Gastrocnemius medialis (tissue), 4 donors: ENCODE measurements at regions of chr11 and their contacts with region 1.

Region 1: GRCh38 chr11:65988791-65989592 is 13.0 kb downstream of the EIF1AD start:
- DNase-seq: peak; percentile 83 to 91
- ATAC-seq: peak; percentile 100
- H3K4me3 ChIP-seq: no peak overlapping the region
- H3K27ac ChIP-seq: peak overlapping the region in 3 of 4 donors; percentile 6 to 40 (median 32)
- H3K4me1 ChIP-seq: no peaks in the 10 kb centered on the region
- H3K27me3 ChIP-seq: no peaks in the 10 kb centered on the region
- CTCF ChIP-seq: peak; percentile 88 to 98 (median 93)
- POLR2A ChIP-seq: no peak

Region 2: GRCh38 chr11:65711785-65712632 is 277.0 kb before region 1 on chr11 and contains the start of gene KAT5:
- in situ Hi-C with region 1: loop called (anchors 10 to 25 kb)
- intact Hi-C with region 1: loop called (anchors 1 kb)
- DNase-seq: peak; percentile 97 to 98
- ATAC-seq: peak; percentile 92 to 94
- H3K4me3 ChIP-seq: peak within 1 kb of the TSS; percentile 73 to 97 (median 84)
- H3K27ac ChIP-seq: peak within 1 kb of the TSS; percentile 96 to 100 (median 99)
- H3K4me1 ChIP-seq: peaks cover 15 to 18% of the 10 kb centered on the region in 2 donors
- H3K27me3 ChIP-seq: no peaks in the 10 kb centered on the region
- CTCF ChIP-seq: peak; percentile 98 to 100 (median 100)
- POLR2A ChIP-seq: peak; percentile 83 to 86
- total RNA-seq, gene KAT5: 40.0 to 69.4 (median 50.0) TPM

Region 3: GRCh38 chr11:65730484-65730883 is 258.5 kb before region 1 on chr11:
- in situ Hi-C with region 1: no loop called
- intact Hi-C with region 1: no loop called
- DNase-seq: no peak
- ATAC-seq: no peak
- H3K4me3 ChIP-seq: no peak overlapping the region
- H3K27ac ChIP-seq: no peak overlapping the region
- H3K4me1 ChIP-seq: no peaks in the 10 kb centered on the region
- H3K27me3 ChIP-seq: no peaks in the 10 kb centered on the region
- CTCF ChIP-seq: no peak
- POLR2A ChIP-seq: no peak

Region 4: DNA sequence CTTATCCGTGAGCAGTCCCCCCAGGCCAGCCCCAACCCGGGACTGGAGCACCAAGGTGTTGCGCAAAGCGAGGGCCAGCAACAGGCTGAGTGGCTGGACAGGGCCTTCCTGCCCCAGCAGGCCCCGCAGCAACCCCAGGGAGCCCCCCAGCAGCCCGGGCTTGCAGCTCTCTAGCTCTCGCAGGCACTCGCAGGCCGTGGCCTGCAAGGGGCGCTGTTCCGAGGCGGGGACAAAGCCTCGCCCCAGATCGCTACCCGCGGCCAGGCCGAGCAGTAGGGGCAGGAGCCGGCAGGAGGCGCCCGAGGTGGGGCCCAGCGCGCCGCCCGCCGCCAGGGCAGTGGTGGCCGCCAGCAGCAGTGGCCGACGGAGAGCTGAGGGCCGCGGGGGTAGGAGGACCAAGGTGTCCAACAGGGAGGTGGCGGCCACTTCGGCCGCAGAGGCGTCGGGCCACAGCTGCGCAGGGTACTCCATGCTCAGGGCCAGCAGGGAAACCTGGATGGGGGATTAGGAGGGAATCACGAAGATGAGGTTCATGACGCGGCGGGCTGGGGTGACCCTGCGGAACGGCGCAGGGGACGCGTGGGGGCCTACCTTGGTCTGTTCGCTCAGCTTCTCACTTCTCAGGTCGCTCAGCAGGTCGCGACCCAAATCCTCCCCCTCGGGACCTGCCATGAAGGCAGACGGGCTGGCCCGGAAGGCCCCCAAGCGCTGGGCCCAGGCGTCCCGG is 209.0 kb before region 1 on chr11:
- in situ Hi-C with region 1: no loop called
- intact Hi-C with region 1: loop called (anchors 10 kb)
- DNase-seq: peak in 1 of 2 donors; percentile 72
- ATAC-seq: peak; percentile 61 to 65
- H3K4me3 ChIP-seq: peak overlapping the region; percentile 59 to 97 (median 74)
- H3K27ac ChIP-seq: peak overlapping the region; percentile 59 to 88 (median 80)
- H3K4me1 ChIP-seq: peaks cover 9% of the 10 kb centered on the region in 2 donors
- H3K27me3 ChIP-seq: peaks cover 0 to 7% (median 4%) of the 10 kb centered on the region in 3 donors
- CTCF ChIP-seq: peak; percentile 77 to 99 (median 87)
- POLR2A ChIP-seq: peak in 1 of 2 donors; percentile 44

Region 5: GRCh38 chr11:65888163-65888814 is 100.7 kb before region 1 on chr11 and contains the start of gene FIBP:
- in situ Hi-C with region 1: loop called (anchors 5 to 10 kb)
- intact Hi-C with region 1: loop called (anchors 1 kb)
- DNase-seq: peak; percentile 97 to 98
- ATAC-seq: peak; percentile 68
- H3K4me3 ChIP-seq: peak within 1 kb of the TSS; percentile 66 to 86 (median 78)
- H3K27ac ChIP-seq: peak within 1 kb of the TSS; percentile 93 to 98 (median 96)
- H3K4me1 ChIP-seq: peaks cover 41 to 45% of the 10 kb centered on the region in 2 donors
- H3K27me3 ChIP-seq: no peaks in the 10 kb centered on the region
- CTCF ChIP-seq: peak; percentile 85 to 95 (median 93)
- POLR2A ChIP-seq: peak; percentile 80 to 92
- total RNA-seq, gene FIBP: 39.6 to 79.3 (median 53.0) TPM

Region 6: GRCh38 chr11:65932558-65932919 is 56.5 kb before region 1 on chr11:
- in situ Hi-C with region 1: no loop called
- intact Hi-C with region 1: no loop called
- DNase-seq: no peak
- ATAC-seq: no peak
- H3K4me3 ChIP-seq: no peak overlapping the region
- H3K27ac ChIP-seq: no peak overlapping the region
- H3K4me1 ChIP-seq: no peaks in the 10 kb centered on the region
- H3K27me3 ChIP-seq: peaks cover 0 to 6% (median 0%) of the 10 kb centered on the region in 3 donors
- CTCF ChIP-seq: no peak
- POLR2A ChIP-seq: no peak

Region 7: GRCh38 chr11:65968600-65969482 is 20.2 kb before region 1 on chr11:
- in situ Hi-C with region 1: no loop called
- intact Hi-C with region 1: loop called (anchors 1 kb)
- DNase-seq: peak; percentile 57 to 76
- ATAC-seq: peak; percentile 98
- H3K4me3 ChIP-seq: no peak overlapping the region
- H3K27ac ChIP-seq: peak overlapping the region; percentile 78 to 86 (median 82)
- H3K4me1 ChIP-seq: peaks cover 25 to 26% of the 10 kb centered on the region in 2 donors
- H3K27me3 ChIP-seq: no peaks in the 10 kb centered on the region
- CTCF ChIP-seq: peak in 4 of 5 experiments; percentile 30 to 48 (median 32)
- POLR2A ChIP-seq: no peak

Region 8: DNA sequence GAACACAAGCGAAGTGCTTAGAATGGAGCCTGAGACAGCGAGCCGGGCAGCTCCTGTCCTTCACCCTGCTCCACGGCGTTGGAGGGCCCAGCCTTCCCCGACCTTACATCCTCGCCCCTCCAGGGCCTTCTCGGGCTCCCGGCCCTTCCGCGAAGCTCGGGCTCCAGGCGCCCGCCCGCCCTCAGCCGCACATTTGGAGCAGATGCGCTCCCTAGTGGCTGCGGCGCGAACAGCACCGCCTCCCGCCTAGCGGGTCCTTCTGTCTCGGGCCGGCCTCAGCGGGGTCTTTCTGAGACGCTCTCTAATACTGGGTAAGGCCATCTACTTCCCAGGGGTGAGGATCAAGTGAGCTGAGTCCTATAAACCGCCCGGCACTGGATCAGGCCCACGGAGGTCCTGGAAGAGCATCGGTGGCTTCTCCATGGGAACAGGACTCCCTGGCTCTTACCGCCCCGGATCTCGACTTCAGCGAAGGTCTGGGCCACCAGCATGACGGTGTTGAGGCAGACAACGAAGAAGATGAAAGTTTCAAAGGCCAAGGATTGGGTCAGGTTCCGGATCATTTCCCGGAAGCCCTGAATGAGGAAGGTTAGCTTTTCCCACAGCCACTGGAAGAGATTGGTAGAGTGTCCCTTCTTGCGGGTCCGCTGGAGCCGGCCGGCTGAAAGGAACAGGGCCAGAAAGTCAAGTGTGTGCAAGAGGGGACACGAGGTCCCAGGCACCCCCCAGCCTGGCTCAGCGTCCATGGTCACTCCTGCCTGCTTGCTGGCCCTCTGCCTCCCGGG is 33.6 kb after region 1 on chr11:
- in situ Hi-C with region 1: no loop called
- intact Hi-C with region 1: loop called (anchors 1 kb)
- DNase-seq: peak; percentile 19 to 47
- ATAC-seq: peak; percentile 83 to 94
- H3K4me3 ChIP-seq: peak overlapping the region; percentile 21 to 49 (median 32)
- H3K27ac ChIP-seq: no peak overlapping the region
- H3K4me1 ChIP-seq: no peaks in the 10 kb centered on the region
- H3K27me3 ChIP-seq: no peaks in the 10 kb centered on the region
- CTCF ChIP-seq: peak; percentile 90 to 97 (median 92)
- POLR2A ChIP-seq: no peak

Region 9: GRCh38 chr11:66172143-66172542 is 183.2 kb after region 1 on chr11:
- in situ Hi-C with region 1: no loop called
- intact Hi-C with region 1: no loop called
- DNase-seq: no peak
- ATAC-seq: no peak
- H3K4me3 ChIP-seq: no peak overlapping the region
- H3K27ac ChIP-seq: no peak overlapping the region
- H3K4me1 ChIP-seq: no peaks in the 10 kb centered on the region
- H3K27me3 ChIP-seq: no peaks in the 10 kb centered on the region
- CTCF ChIP-seq: no peak
- POLR2A ChIP-seq: no peak